ENCODE measurements at regions of chr13 and their contacts with region 1.

Region 1: DNA sequence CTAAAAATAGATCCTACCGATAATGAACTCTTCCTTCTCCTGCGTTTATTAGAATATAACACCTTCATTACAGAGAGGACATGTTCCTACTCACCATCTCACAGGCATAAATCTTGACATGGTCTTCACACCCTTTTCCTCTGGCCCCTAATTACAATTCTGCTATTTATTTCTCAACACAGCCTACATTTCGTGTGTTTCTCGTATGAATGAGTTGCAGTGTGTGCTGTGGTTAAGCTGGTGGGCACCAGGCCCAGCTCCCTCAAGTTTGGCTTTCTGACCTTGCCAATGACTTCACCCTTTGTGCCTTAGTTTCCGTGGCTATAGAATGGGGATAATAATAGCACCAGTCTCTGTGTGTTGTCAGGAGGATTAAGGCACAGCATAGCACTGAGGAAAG is 12.3 kb upstream of the KATNAL1 start:
- DNase-seq: no peak
- ATAC-seq: no peak
- H3K4me3 ChIP-seq: no peak overlapping the region
- H3K27ac ChIP-seq: no peak overlapping the region
- H3K4me1 ChIP-seq: no peaks in the 10 kb centered on the region
- H3K27me3 ChIP-seq: no peaks in the 10 kb centered on the region
- CTCF ChIP-seq: no peak

Region 2: DNA sequence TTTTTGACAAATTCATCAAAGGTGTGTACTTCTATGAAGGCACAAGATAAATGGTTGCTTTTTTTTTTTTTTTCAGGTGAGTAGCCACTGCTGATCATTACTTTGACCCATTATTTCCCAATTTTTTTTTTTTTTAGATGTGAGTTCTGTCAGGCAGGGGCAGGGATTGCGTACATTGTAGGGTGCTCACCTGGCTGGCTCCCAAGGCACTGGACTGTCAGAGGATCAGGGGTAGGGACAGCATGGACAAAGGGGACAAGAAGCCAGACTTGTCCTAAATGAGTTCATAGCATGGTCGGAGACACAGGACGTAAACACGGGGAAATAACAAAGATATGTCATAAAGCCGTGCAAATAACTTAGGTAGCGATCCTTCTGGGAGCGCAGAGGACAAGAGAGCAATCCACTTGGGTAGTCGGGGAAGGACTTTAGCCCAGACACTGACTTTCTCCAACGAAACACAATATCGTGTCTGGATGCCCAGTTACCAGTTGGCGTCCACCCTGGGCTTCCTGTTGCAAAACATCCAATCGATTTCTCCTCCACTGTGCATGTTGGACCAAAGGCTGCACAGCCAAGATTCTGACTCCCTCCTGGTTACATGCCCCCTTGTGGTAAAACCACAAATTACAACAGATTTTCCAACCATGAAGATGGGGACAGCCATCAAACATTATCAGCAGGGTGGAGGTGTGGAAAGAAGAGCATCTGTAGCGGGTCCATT is 15.2 kb after region 1 on chr13:
- CTCF ChIA-PET with region 1: no interaction called
- POLR2A ChIA-PET with region 1: interaction called, 11 read pairs
- in situ Hi-C with region 1: no loop called
- intact Hi-C with region 1: no loop called
- DNase-seq: no peak
- ATAC-seq: peak; percentile 50; the same call in 1 of the 2 replicates
- H3K4me3 ChIP-seq: no peak overlapping the region
- H3K27ac ChIP-seq: no peak overlapping the region
- H3K4me1 ChIP-seq: peaks cover 8% of the 10 kb centered on the region
- H3K27me3 ChIP-seq: no peaks in the 10 kb centered on the region
- CTCF ChIP-seq: peak; percentile 66